Stomach (tissue), 19 donors: ENCODE measurements at regions of chr14 and their contacts with region 1.

Region 1: DNA sequence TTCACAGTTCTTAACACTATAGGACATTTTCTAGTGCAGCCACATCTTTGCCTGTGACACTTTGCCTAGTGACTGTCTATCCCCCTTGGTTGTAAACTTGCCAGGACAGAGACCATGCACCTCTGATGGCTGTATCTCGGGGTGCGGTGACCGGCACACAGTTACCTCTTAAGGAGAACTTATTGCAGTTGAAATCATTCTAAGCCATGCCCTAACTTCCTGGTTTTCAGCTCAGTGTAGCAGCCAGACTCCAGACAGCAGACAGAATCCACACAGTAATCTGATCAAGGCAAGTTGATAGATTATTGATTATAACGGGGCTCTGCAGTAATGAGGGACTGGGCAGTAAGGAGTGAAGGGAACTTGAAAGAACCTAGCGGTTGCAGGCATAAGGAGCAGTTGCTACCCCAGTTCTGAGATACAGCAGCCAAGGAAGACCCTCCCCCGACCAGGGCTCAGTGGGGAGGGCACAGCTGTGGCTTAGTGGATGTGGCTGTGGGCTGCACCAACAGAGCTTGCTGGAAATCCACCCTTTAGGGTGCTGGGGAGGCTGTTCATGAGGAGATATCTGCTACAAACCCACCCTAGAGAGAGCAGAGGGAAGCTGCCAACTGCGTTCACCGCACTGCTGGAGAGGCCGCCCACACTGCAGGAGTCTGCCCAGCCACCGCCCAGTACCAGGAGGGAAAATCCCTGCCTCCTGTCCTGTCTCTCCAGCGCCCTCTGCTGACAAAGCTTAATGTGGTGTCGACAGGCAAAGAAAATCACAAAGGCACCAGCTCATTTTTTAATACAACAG is 58.2 kb upstream of the BEGAIN start:
- DNase-seq: peak; percentile 93 to 94
- H3K4me3 ChIP-seq: no peak overlapping the region
- H3K27ac ChIP-seq: no peak overlapping the region
- H3K4me1 ChIP-seq: peaks cover 0 to 29% (median 6%) of the 10 kb centered on the region in 4 donors
- H3K27me3 ChIP-seq: peaks cover 0 to 14% (median 0%) of the 10 kb centered on the region in 3 donors
- CTCF ChIP-seq: peak in 5 of 7 experiments; percentile 50 to 77 (median 66)
- EP300 ChIP-seq: no peak
- POLR2A ChIP-seq: no peak

Region 2: DNA sequence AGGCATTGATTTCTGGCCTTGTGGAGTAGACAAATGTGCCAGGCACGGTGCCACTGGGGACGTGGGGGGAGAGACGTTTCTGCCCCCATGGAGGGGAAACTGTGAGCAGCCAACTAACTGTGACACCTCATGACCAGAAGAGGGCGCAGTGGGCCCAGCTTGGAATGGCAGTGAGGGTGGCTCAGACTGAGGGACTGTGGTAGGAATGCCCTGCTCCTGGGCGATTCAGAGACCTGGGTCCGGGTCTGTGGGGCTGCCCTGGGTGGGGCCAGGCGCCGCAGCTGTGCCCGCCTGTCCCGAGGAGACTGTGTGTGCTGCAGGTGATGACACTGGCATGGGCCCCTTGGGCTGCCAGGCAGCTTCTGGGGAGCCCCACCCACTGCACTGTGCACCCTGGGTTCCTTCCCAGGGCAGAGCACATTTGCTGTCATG is 261.6 kb before region 1 on chr14:
- intact Hi-C with region 1: loop called (anchors 10 kb)
- DNase-seq: peak; percentile 77 to 87
- H3K4me3 ChIP-seq: no peak overlapping the region
- H3K27ac ChIP-seq: no peak overlapping the region
- H3K4me1 ChIP-seq: peaks cover under 1 to 34% (median 19%) of the 10 kb centered on the region in 4 donors
- H3K27me3 ChIP-seq: no peaks in the 10 kb centered on the region
- CTCF ChIP-seq: peak in 5 of 7 experiments; percentile 47 to 83 (median 69)
- EP300 ChIP-seq: no peak
- POLR2A ChIP-seq: no peak

Region 3: GRCh38 chr14:100440187-100440631 is 205.2 kb before region 1 on chr14:
- intact Hi-C with region 1: loop called (anchors 10 kb)
- DNase-seq: peak; percentile 77 to 85
- H3K4me3 ChIP-seq: no peak overlapping the region
- H3K27ac ChIP-seq: peak overlapping the region; percentile 21 to 40 (median 23)
- H3K4me1 ChIP-seq: peaks cover 21 to 60% (median 36%) of the 10 kb centered on the region in 4 donors
- H3K27me3 ChIP-seq: no peaks in the 10 kb centered on the region
- CTCF ChIP-seq: peak in 5 of 7 experiments; percentile 48 to 60 (median 52)
- EP300 ChIP-seq: no peak
- POLR2A ChIP-seq: no peak

Region 4: GRCh38 chr14:100524933-100525243 is 120.5 kb before region 1 on chr14:
- intact Hi-C with region 1: no loop called
- DNase-seq: peak; percentile 25 to 64
- H3K4me3 ChIP-seq: no peak overlapping the region
- H3K27ac ChIP-seq: no peak overlapping the region
- H3K4me1 ChIP-seq: no peaks in the 10 kb centered on the region
- H3K27me3 ChIP-seq: no peaks in the 10 kb centered on the region
- CTCF ChIP-seq: peak in 1 of 7 experiments; percentile 22
- EP300 ChIP-seq: no peak
- POLR2A ChIP-seq: no peak

Region 5: GRCh38 chr14:100824091-100824551 is 178.7 kb after region 1 on chr14:
- intact Hi-C with region 1: no loop called
- DNase-seq: peak in 1 of 2 donors; percentile 87
- H3K4me3 ChIP-seq: no peak overlapping the region
- H3K27ac ChIP-seq: peak overlapping the region in 1 of 5 donors; percentile 79
- H3K4me1 ChIP-seq: peaks cover 0 to 7% (median 0%) of the 10 kb centered on the region in 4 donors
- H3K27me3 ChIP-seq: peaks cover 0 to 68% (median 33%) of the 10 kb centered on the region in 3 donors
- CTCF ChIP-seq: no peak
- EP300 ChIP-seq: no peak
- POLR2A ChIP-seq: no peak